IMR-90 (cell line): ENCODE measurements at regions of chr5 and their contacts with region 1.

Region 1: GRCh38 chr5:174532455-174533453 is 191.6 kb upstream of the MSX2 start:
- DNase-seq: peak; percentile 98
- ATAC-seq: peak; percentile 86
- H3K4me3 ChIP-seq: 0 out of 2 replicates have a peak overlapping the region, but pooled peaks have one; percentile 0
- H3K27ac ChIP-seq: peak overlapping the region; percentile 93
- H3K4me1 ChIP-seq: peaks cover 32% of the 10 kb centered on the region
- H3K27me3 ChIP-seq: no peaks in the 10 kb centered on the region
- CTCF ChIP-seq: no peak
- POLR2A ChIP-seq: no peak
- RAD21 ChIP-seq: no peak

Region 2: GRCh38 chr5:174424219-174425053 is 108.3 kb before region 1 on chr5:
- CTCF ChIA-PET with region 1: interaction called, 4 read pairs
- POLR2A ChIA-PET with region 1: no interaction called
- dilution Hi-C with region 1: no loop called
- in situ Hi-C with region 1: no loop called
- intact Hi-C with region 1: loop called (anchors 5 kb)
- DNase-seq: no peak
- ATAC-seq: no peak; the same call in 1 of the 2 replicates
- H3K4me3 ChIP-seq: no peak overlapping the region
- H3K27ac ChIP-seq: no peak overlapping the region
- H3K4me1 ChIP-seq: peaks cover 1% of the 10 kb centered on the region; the same call in 1 of the 2 replicates
- H3K27me3 ChIP-seq: no peaks in the 10 kb centered on the region; the same call in 1 of the 2 replicates
- CTCF ChIP-seq: peak; percentile 39
- POLR2A ChIP-seq: no peak
- RAD21 ChIP-seq: peak; percentile 32; the same call in 1 of the 2 replicates

Region 3: GRCh38 chr5:174550042-174550441 is 17.3 kb after region 1 on chr5:
- CTCF ChIA-PET with region 1: no interaction called
- POLR2A ChIA-PET with region 1: no interaction called
- dilution Hi-C with region 1: no loop called
- in situ Hi-C with region 1: no loop called
- intact Hi-C with region 1: loop called (anchors 2 kb)
- DNase-seq: peak; percentile 55
- ATAC-seq: peak; percentile 79
- H3K4me3 ChIP-seq: no peak overlapping the region
- H3K27ac ChIP-seq: no peak overlapping the region
- H3K4me1 ChIP-seq: no peaks in the 10 kb centered on the region
- H3K27me3 ChIP-seq: no peaks in the 10 kb centered on the region
- CTCF ChIP-seq: no peak
- POLR2A ChIP-seq: no peak
- RAD21 ChIP-seq: no peak

Region 4: GRCh38 chr5:174559141-174559540 is 26.4 kb after region 1 on chr5:
- CTCF ChIA-PET with region 1: no interaction called
- POLR2A ChIA-PET with region 1: interaction called, 3 read pairs
- dilution Hi-C with region 1: no loop called
- in situ Hi-C with region 1: no loop called
- intact Hi-C with region 1: loop called (anchors 2 kb)
- DNase-seq: peak; percentile 89
- ATAC-seq: peak; percentile 89
- H3K4me3 ChIP-seq: no peak overlapping the region
- H3K27ac ChIP-seq: peak overlapping the region; percentile 93
- H3K4me1 ChIP-seq: peaks cover 12% of the 10 kb centered on the region
- H3K27me3 ChIP-seq: no peaks in the 10 kb centered on the region
- CTCF ChIP-seq: no peak
- POLR2A ChIP-seq: no peak
- RAD21 ChIP-seq: no peak

Region 5: DNA sequence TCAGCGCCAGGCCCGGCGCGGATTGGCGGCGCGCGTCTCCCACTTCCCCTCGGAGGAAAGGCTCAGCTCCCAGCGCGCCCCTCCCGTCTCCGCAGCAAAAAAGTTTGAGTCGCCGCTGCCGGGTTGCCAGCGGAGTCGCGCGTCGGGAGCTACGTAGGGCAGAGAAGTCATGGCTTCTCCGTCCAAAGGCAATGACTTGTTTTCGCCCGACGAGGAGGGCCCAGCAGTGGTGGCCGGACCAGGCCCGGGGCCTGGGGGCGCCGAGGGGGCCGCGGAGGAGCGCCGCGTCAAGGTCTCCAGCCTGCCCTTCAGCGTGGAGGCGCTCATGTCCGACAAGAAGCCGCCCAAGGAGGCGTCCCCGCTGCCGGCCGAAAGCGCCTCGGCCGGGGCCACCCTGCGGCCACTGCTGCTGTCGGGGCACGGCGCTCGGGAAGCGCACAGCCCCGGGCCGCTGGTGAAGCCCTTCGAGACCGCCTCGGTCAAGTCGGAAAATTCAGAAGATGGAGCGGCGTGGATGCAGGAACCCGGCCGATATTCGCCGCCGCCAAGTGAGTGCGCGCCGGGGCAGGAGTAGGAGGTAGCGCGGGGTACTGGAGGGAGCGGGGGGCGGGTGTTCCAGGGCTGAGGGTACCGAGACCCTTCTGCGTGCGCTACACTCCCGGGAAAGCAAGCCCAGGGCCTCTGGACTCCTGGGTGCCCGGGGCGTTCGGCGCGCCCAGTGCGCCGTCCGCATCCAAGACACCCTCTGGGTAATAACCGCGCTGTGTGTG is 191.9 kb after region 1 on chr5 and contains the start of gene MSX2:
- CTCF ChIA-PET with region 1: no interaction called
- POLR2A ChIA-PET with region 1: interaction called, 6 read pairs
- dilution Hi-C with region 1: no loop called
- in situ Hi-C with region 1: no loop called
- intact Hi-C with region 1: loop called (anchors 1 kb)
- DNase-seq: peak; percentile 86
- ATAC-seq: peak; percentile 96
- H3K4me3 ChIP-seq: peak within 1 kb of the TSS; percentile 54
- H3K27ac ChIP-seq: peak within 1 kb of the TSS; percentile 38
- H3K4me1 ChIP-seq: no peaks in the 10 kb centered on the region
- H3K27me3 ChIP-seq: peaks cover 40% of the 10 kb centered on the region
- CTCF ChIP-seq: no peak
- POLR2A ChIP-seq: peak; percentile 59
- RAD21 ChIP-seq: no peak
- total RNA-seq, gene MSX2: 1.9 and 2.2 TPM in 2 replicates

Region 6: GRCh38 chr5:174735498-174736330 is 203.0 kb after region 1 on chr5:
- CTCF ChIA-PET with region 1: no interaction called
- POLR2A ChIA-PET with region 1: no interaction called
- dilution Hi-C with region 1: no loop called
- in situ Hi-C with region 1: no loop called
- intact Hi-C with region 1: loop called (anchors 5 kb)
- DNase-seq: no peak
- ATAC-seq: peak; percentile 51
- H3K4me3 ChIP-seq: peak overlapping the region; percentile 2; the same call in 1 of the 2 replicates
- H3K27ac ChIP-seq: peak overlapping the region; percentile 36
- H3K4me1 ChIP-seq: peaks cover 6% of the 10 kb centered on the region
- H3K27me3 ChIP-seq: peaks cover 27% of the 10 kb centered on the region
- CTCF ChIP-seq: peak; percentile 39
- POLR2A ChIP-seq: no peak
- RAD21 ChIP-seq: peak; percentile 61